Dendritic cell treated with granulocyte-macrophage colony-stimulating factor and Interleukin-4, amounts not matched to agents 40 ng/mL and 50 ng/mL, for 4 days (primary cell): ENCODE measurements at regions of chr5 and their contacts with region 1.

Region 1: GRCh38 chr5:109506556-109506955 is 96.8 kb upstream of the PJA2 start:
- H3K4me3 Mint-ChIP-seq: no peak overlapping the region
- H3K27ac Mint-ChIP-seq: no peak overlapping the region
- H3K4me1 Mint-ChIP-seq: peaks cover 13% of the 10 kb centered on the region
- H3K27me3 Mint-ChIP-seq: peaks cover 37% of the 10 kb centered on the region

Region 2: DNA sequence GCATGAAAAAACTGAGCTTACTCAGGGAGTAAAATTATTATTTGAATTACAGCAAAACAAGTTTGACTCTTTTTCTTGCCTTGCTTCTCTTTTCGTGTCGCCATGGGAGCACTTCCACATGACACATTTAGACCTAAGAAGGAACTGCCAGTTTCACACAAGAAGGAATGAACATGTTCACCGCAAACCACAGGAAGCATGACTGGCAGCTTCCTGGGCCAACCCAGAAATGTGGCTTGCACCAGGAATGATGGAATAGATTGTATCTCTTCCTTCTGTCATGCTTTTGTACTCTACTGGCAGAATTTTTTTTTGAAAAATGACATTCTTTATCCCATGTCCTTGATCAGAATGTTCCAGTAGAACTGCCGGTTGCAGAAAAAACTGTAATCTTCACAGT is 150.3 kb after region 1 on chr5:
- intact Hi-C with region 1: loop called (anchors 10 kb)
- H3K4me3 Mint-ChIP-seq: no peak overlapping the region
- H3K27ac Mint-ChIP-seq: peak overlapping the region; percentile 70
- H3K4me1 Mint-ChIP-seq: peaks cover 35% of the 10 kb centered on the region
- H3K27me3 Mint-ChIP-seq: peaks cover 6% of the 10 kb centered on the region